Right cardiac atrium (tissue), 5 donors: ENCODE measurements at regions of chr11 and their contacts with region 1.

Region 1: GRCh38 chr11:111841370-111842053 is 29.9 kb downstream of the ALG9 start:
- DNase-seq: peak; percentile 85 to 94 (median 90)
- ATAC-seq: peak; percentile 90
- H3K4me3 ChIP-seq: no peak overlapping the region
- H3K27ac ChIP-seq: no peak overlapping the region
- H3K4me1 ChIP-seq: no peaks in the 10 kb centered on the region
- H3K27me3 ChIP-seq: no peaks in the 10 kb centered on the region

Region 2: GRCh38 chr11:111565114-111565720 is 276.3 kb before region 1 on chr11:
- intact Hi-C with region 1: loop called in 2 of 4 experiments (anchors 5 to 10 kb)
- DNase-seq: peak; percentile 35 to 68 (median 64)
- ATAC-seq: peak in 1 of 2 donors; percentile 50
- H3K4me3 ChIP-seq: no peak overlapping the region
- H3K27ac ChIP-seq: no peak overlapping the region
- H3K4me1 ChIP-seq: peaks cover 2% of the 10 kb centered on the region
- H3K27me3 ChIP-seq: no peaks in the 10 kb centered on the region

Region 3: GRCh38 chr11:111586388-111586831 is 255.1 kb before region 1 on chr11:
- intact Hi-C with region 1: loop called in 3 of 4 experiments (anchors 5 to 10 kb)
- DNase-seq: no peak
- ATAC-seq: peak in 1 of 2 donors; percentile 44
- H3K4me3 ChIP-seq: no peak overlapping the region
- H3K27ac ChIP-seq: no peak overlapping the region
- H3K4me1 ChIP-seq: peaks cover 2% of the 10 kb centered on the region
- H3K27me3 ChIP-seq: no peaks in the 10 kb centered on the region

Region 4: GRCh38 chr11:111601979-111602864 is 239.3 kb before region 1 on chr11 and contains the start of gene SIK2:
- intact Hi-C with region 1: loop called (anchors 5 to 10 kb)
- DNase-seq: peak; percentile 97 to 98 (median 98)
- ATAC-seq: peak; percentile 97 to 98
- H3K4me3 ChIP-seq: peak within 1 kb of the TSS; percentile 91
- H3K27ac ChIP-seq: peak within 1 kb of the TSS; percentile 86
- H3K4me1 ChIP-seq: no peaks in the 10 kb centered on the region
- H3K27me3 ChIP-seq: no peaks in the 10 kb centered on the region
- total RNA-seq, gene SIK2: 18.0 to 51.7 (median 21.9) TPM

Region 5: GRCh38 chr11:111777094-111778046 is 64.1 kb before region 1 on chr11:
- intact Hi-C with region 1: loop called in 2 of 4 experiments (anchors 10 kb)
- DNase-seq: no peak
- ATAC-seq: peak; percentile 74 to 76
- H3K4me3 ChIP-seq: no peak overlapping the region
- H3K27ac ChIP-seq: no peak overlapping the region
- H3K4me1 ChIP-seq: no peaks in the 10 kb centered on the region
- H3K27me3 ChIP-seq: no peaks in the 10 kb centered on the region

Region 6: DNA sequence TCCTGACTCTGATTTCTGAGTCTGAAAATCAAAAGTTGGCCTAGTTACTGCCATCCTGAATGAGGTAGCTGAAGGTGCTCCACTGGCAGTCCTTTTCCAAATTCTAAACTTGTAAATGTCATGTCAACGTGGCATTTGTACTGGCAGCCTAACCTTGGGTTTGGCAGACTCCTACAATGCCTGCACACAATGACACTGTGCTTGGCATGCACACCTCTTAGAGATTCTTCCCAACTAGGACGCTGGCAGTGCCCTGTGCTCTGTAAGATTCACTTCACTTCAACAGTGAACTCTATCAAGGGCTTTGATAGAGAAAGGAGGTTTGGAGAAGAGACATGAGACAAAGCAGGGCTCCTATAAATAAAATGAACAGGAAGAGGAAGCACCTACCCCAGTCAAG is 53.5 kb before region 1 on chr11:
- intact Hi-C with region 1: loop called in 1 of 4 experiments (anchors 10 kb)
- DNase-seq: peak; percentile 38 to 78 (median 69)
- ATAC-seq: peak; percentile 91 to 92
- H3K4me3 ChIP-seq: no peak overlapping the region
- H3K27ac ChIP-seq: peak overlapping the region; percentile 71
- H3K4me1 ChIP-seq: no peaks in the 10 kb centered on the region
- H3K27me3 ChIP-seq: no peaks in the 10 kb centered on the region

Region 7: GRCh38 chr11:111886844-111887243 is 45.3 kb after region 1 on chr11:
- intact Hi-C with region 1: no loop called
- DNase-seq: no peak
- ATAC-seq: no peak
- H3K4me3 ChIP-seq: no peak overlapping the region
- H3K27ac ChIP-seq: no peak overlapping the region
- H3K4me1 ChIP-seq: no peaks in the 10 kb centered on the region
- H3K27me3 ChIP-seq: no peaks in the 10 kb centered on the region